Activated CD4-positive, alpha-beta T cell treated with anti-CD3 and anti-CD28 coated beads for 36 hours (primary cell): ENCODE measurements at regions of chr1 and their contacts with region 1.

Region 1: GRCh38 chr1:111587509-111588174 is 31.9 kb upstream of the RAP1A start:
- DNase-seq: no peak
- ATAC-seq: peak; percentile 35
- H3K4me3 Mint-ChIP-seq: no peak overlapping the region
- H3K27ac Mint-ChIP-seq: no peak overlapping the region
- H3K4me1 Mint-ChIP-seq: peaks cover 26% of the 10 kb centered on the region
- H3K27me3 Mint-ChIP-seq: no peaks in the 10 kb centered on the region

Region 2: GRCh38 chr1:111570781-111571181 is 16.9 kb before region 1 on chr1:
- CTCF ChIA-PET with region 1: interaction called, 11 read pairs
- POLR2A ChIA-PET with region 1: no interaction called
- intact Hi-C with region 1: no loop called
- DNase-seq: peak; percentile 60
- ATAC-seq: peak; percentile 84
- H3K4me3 Mint-ChIP-seq: no peak overlapping the region
- H3K27ac Mint-ChIP-seq: peak overlapping the region; percentile 29
- H3K4me1 Mint-ChIP-seq: peaks cover 14% of the 10 kb centered on the region
- H3K27me3 Mint-ChIP-seq: no peaks in the 10 kb centered on the region

Region 3: DNA sequence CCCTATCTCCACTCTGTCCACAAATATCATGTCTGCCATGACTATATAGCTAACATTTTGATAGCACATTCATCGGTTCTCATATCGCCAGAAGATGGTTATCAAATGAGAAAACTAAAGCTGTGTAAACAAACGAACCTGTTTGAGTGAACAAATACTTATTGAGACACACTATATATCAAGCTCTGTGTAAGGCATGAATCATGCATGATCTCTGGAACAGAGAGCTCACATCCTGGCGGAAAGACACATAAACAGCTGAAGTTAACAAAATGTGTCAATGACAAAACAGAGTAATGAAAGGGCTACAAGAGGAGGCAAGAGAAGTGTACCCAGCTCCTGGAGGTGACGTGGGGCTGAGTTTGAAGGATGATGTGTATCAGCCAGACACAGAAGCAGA is 388.7 kb after region 1 on chr1:
- CTCF ChIA-PET with region 1: no interaction called
- POLR2A ChIA-PET with region 1: no interaction called
- intact Hi-C with region 1: no loop called
- DNase-seq: no peak
- ATAC-seq: no peak
- H3K4me3 Mint-ChIP-seq: no peak overlapping the region
- H3K27ac Mint-ChIP-seq: no peak overlapping the region
- H3K4me1 Mint-ChIP-seq: no peaks in the 10 kb centered on the region
- H3K27me3 Mint-ChIP-seq: peaks cover 53% of the 10 kb centered on the region

Region 4: GRCh38 chr1:112011215-112011614 is 423.6 kb after region 1 on chr1:
- CTCF ChIA-PET with region 1: no interaction called
- POLR2A ChIA-PET with region 1: no interaction called
- intact Hi-C with region 1: no loop called
- DNase-seq: no peak
- ATAC-seq: no peak
- H3K4me3 Mint-ChIP-seq: no peak overlapping the region
- H3K27ac Mint-ChIP-seq: no peak overlapping the region
- H3K4me1 Mint-ChIP-seq: no peaks in the 10 kb centered on the region
- H3K27me3 Mint-ChIP-seq: peaks cover 5% of the 10 kb centered on the region